ENCODE measurements at regions of chrX and their contacts with region 1.

Region 1: GRCh38 chrX:68196939-68197791 is 236.1 kb downstream of the OPHN1 start:
- DNase-seq: no peak
- H3K4me3 ChIP-seq: no peak overlapping the region
- H3K27me3 ChIP-seq: no peaks in the 10 kb centered on the region
- CTCF ChIP-seq: peak; percentile 59

Region 2: DNA sequence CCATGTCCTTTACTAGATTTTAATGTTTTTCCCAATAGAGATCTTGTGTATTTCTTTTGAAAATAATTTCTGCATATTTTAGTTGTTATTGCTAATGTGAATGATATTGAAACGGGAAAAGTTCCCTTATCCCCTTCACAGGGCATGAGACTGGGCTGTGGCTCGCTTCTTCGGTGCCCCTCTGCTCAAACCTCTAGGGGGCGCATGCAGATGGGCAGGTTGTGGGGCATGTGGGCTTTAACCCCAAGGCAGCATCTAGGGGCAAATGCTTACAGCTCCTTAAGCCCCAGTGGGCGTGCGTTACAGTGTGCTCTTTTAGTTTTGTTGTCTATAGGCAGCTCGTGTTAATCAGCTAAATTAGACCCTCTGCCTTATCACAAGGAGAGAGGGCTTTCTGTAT is 41.4 kb after region 1 on chrX:
- CTCF ChIA-PET with region 1: no interaction called
- POLR2A ChIA-PET with region 1: no interaction called
- DNase-seq: no peak
- H3K4me3 ChIP-seq: no peak overlapping the region
- H3K27me3 ChIP-seq: no peaks in the 10 kb centered on the region
- CTCF ChIP-seq: peak; percentile 45

Region 3: DNA sequence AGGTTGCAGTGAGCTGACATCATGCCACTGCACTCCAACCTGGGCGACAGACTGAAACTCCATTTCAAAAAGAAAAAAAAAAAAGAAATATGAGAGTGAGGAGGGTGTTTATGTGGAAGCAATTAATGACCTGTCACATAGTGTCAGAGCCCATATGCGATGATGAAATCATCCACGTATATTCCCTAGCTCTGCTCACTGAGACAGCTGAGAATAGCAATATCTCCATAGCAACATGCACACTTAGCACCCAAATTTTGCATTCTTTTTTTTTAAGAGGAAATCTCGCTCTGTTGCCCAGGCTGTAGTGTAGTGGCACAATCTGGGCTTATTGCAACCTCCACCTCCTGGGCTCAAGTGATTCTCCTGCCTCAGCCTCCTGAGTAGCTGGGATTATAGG is 267.6 kb after region 1 on chrX:
- CTCF ChIA-PET with region 1: interaction called, 19 read pairs
- POLR2A ChIA-PET with region 1: no interaction called
- DNase-seq: no peak
- H3K4me3 ChIP-seq: no peak overlapping the region
- H3K27me3 ChIP-seq: no peaks in the 10 kb centered on the region
- CTCF ChIP-seq: no peak